GM10248 (cell line): ENCODE measurements at regions of chr19 and their contacts with region 1.

Region 1: GRCh38 chr19:40777937-40778705 is at the start of gene RAB4B:
- DNase-seq: peak; percentile 95
- CTCF ChIP-seq: no peak

Region 2: GRCh38 chr19:40705362-40705651 is 72.8 kb before region 1 on chr19:
- CTCF ChIA-PET with region 1: no interaction called
- POLR2A ChIA-PET with region 1: no interaction called
- DNase-seq: no peak
- CTCF ChIP-seq: no peak

Region 3: DNA sequence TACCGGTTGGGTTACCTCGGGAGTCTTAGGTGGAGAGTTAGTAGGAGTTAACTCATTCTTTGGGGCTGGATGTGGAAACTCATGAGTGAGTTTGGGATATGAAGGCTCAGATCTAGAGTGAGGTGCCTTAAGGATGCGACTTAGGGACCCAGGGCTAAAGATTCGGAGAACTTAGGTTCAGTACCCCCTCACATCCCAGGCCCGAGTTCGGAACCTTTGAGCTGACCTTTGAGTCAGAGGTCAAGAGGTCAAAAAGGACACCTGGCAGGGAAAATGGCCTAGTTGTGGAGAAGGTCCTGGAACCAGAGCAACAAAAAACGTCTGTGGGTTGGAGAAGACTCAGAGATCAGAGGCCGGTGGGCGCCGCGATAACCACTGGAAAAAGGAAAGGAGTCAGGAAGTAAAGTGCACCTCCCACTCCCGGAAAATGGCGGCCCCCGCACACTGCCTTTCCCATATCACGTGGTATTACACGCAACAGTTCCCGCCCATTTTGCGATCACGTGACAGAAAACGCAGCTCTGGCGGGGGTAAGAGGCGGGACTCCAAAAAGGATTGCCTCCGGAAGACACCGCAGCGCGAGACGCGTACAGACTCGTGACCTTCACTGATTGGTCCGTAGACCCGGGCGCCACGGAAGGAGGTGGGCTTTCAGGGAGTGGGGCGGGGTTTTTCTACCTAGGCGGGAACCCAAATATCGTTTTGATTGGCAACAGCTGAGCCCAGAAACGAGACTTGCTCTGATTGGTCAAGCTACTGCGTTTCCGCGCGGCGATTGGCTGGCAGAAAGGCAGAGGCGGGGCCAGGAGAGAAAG is 27.9 kb before region 1 on chr19 and contains the start of gene ACTMAP:
- CTCF ChIA-PET with region 1: interaction called, 9 read pairs
- POLR2A ChIA-PET with region 1: interaction called, 21 read pairs
- DNase-seq: peak; percentile 99
- CTCF ChIP-seq: no peak

Region 4: GRCh38 chr19:40798223-40798996 is 20.3 kb after region 1 on chr19:
- CTCF ChIA-PET with region 1: interaction called, 23 read pairs
- POLR2A ChIA-PET with region 1: interaction called, 35 read pairs
- DNase-seq: peak; percentile 97
- CTCF ChIP-seq: peak; percentile 61

Region 5: DNA sequence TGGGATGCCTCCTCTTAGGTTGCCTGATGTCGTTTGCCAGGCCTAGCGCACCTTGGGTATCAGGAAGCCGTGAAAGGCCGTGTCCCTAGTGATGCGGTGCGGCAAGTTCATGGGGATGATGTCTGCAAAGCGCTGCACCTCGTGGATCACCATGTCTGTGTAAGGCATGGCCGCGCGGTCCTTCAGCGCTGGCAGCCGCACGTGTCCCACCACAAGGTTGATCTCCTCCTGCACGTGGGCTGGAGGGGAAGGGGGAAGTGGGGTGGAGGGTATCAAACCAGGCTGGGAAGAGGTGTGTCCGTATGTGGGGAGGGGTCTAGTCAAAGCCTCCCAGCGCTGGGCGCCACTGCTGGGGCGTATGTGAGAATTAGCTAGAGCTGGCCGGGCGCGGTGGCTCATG is 44.0 kb after region 1 on chr19:
- CTCF ChIA-PET with region 1: no interaction called
- POLR2A ChIA-PET with region 1: no interaction called
- DNase-seq: no peak
- CTCF ChIP-seq: no peak

Region 6: DNA sequence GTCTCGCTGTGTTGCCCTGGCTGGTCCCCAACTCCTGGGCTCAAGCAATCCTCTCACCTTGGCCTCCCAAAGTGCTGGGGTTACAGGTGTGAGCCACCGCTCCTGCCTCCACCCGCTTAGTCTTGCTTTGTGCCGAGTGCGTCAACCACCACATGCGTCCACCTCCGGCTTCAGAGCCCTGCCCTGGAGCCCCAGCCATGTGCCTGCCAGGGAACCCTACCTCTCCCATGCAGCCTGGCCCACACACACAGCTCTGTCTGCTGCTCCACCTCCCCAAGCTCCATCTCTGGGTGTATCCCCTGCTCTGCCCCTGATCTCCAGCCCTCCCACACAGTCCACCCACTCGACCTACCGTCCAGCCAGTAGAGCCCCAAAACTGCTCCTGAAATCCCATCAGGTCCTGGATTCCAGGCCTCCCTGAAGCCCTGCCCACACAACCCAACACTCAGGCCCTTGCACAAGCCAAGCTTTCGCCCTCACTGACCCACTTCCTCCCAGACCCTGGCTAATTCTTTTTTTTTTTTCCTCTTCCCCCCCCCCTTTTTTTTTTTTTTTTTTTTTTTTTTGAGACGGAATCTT is 345.7 kb after region 1 on chr19:
- CTCF ChIA-PET with region 1: no interaction called
- POLR2A ChIA-PET with region 1: no interaction called
- DNase-seq: no peak
- CTCF ChIP-seq: no peak